ENCODE measurements at regions of chr3 and their contacts with region 1.

Region 1: DNA sequence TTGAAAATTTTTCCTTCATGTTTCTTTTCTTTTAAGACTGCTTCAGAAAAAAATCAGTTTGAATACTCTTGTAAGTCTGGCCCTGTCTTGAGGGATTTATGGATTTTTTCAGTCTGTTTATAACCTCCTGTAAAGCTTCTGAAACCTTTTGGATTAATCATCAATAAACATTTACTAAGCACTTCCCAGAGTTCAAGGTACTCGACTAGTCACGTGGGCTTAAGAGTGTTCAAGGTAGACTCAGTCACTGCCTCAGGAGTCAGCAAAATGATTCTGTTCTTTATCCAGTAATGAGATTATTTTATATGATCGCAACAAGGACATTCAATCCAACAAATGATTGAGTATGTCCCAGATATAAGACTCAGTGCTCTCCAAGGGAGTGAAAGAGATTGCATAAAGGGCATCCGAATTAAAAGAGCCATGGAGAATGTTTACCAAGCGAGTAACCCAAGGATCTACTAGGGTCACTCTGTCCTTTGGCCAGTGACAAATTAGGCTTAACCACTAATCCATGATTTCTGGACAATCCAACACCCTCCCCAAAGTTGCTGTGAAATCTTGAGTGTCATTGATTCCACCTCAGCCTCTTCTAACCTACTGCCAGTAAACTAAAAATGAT is 726.6 kb upstream of the NAALADL2 start:
- DNase-seq: no peak
- H3K4me3 ChIP-seq: no peak overlapping the region
- H3K27ac ChIP-seq: no peak overlapping the region
- H3K4me1 ChIP-seq: peaks cover 2% of the 10 kb centered on the region
- H3K27me3 ChIP-seq: no peaks in the 10 kb centered on the region
- CTCF ChIP-seq: no peak

Region 2: GRCh38 chr3:174253196-174253823 is 120.8 kb after region 1 on chr3:
- CTCF ChIA-PET with region 1: interaction called, 12 read pairs
- POLR2A ChIA-PET with region 1: no interaction called
- intact Hi-C with region 1: no loop called
- DNase-seq: no peak
- H3K4me3 ChIP-seq: no peak overlapping the region
- H3K27ac ChIP-seq: no peak overlapping the region
- H3K4me1 ChIP-seq: no peaks in the 10 kb centered on the region
- H3K27me3 ChIP-seq: no peaks in the 10 kb centered on the region
- CTCF ChIP-seq: no peak

Region 3: DNA sequence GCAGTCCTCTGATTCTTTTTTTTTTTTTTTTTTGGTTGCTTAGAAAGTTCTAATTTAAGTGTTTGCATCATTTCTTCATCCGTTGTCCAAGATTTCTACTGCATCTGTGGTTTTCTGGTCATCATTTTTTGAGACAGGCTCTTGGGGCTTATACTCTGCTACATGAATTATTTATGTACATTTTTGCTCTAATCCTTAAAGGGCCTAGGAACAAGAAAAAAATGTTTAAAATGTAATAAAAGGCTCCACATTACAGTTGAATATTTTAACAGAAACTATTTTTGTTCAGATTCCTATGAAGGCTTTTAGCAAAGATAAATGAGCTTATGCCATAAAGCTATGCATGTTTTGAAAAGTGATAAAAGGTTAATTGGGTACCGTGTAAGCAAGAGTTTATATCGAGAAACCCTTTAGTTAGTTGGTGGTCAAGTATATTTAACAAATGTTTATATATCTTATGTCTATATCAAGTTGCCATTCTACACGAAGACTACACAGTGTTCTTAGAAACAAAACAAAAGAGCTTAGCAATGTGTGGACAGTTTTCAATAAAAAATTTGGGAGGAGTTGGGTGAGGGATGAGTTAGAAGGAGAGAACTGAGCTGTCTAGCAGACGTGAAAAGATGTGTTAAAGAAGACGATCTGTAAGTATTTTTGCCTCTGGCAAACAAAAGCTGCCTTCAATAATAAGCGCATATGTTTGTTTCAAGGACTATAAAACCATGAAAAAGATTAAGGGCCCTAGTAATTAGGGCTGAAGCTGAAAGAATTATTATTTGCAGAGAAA is 163.0 kb after region 1 on chr3:
- CTCF ChIA-PET with region 1: no interaction called
- POLR2A ChIA-PET with region 1: no interaction called
- intact Hi-C with region 1: no loop called
- DNase-seq: no peak
- H3K4me3 ChIP-seq: no peak overlapping the region
- H3K27ac ChIP-seq: no peak overlapping the region
- H3K4me1 ChIP-seq: no peaks in the 10 kb centered on the region
- H3K27me3 ChIP-seq: no peaks in the 10 kb centered on the region
- CTCF ChIP-seq: no peak